MCF 10A (cell line): ENCODE measurements at regions of chr11 and their contacts with region 1.

Region 1: DNA sequence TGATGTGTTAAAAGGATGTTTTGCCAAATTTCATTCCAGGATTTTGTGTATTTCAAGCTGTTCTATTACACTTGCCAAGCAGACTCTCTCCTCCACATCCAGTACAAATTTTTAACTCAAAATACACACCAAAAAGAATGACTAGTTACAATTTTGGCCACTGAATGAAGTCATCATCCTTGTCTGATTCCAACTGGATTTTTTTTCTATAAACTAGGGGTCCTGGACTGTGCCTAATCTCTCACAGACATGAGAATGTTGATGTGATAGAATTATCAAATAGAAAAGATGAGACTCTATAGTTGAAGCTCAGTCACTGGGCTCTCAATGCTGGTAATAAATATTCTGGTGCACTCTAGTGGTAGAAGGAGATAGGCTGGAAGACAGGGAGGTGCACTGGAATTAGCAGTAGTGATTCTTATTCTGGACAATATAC is 85.8 kb downstream of the FANCF start:
- DNase-seq: peak; percentile 51
- H3K4me3 Mint-ChIP-seq: no peak overlapping the region
- H3K27ac Mint-ChIP-seq: no peak overlapping the region
- H3K4me1 Mint-ChIP-seq: no peaks in the 10 kb centered on the region
- H3K27me3 Mint-ChIP-seq: peaks cover 42% of the 10 kb centered on the region
- CTCF ChIP-seq: peak; percentile 65

Region 2: GRCh38 chr11:22337596-22338485 is 202.0 kb before region 1 on chr11 and contains the start of gene SLC17A6:
- CTCF ChIA-PET with region 1: interaction called, 60 read pairs
- POLR2A ChIA-PET with region 1: interaction called, 4 read pairs
- intact Hi-C with region 1: loop called (anchors 1 kb)
- DNase-seq: peak; percentile 65
- H3K4me3 Mint-ChIP-seq: no peak within 1 kb of the TSS
- H3K27ac Mint-ChIP-seq: no peak within 1 kb of the TSS
- H3K4me1 Mint-ChIP-seq: no peaks in the 10 kb centered on the region
- H3K27me3 Mint-ChIP-seq: peaks cover 71% of the 10 kb centered on the region
- CTCF ChIP-seq: no peak
- total RNA-seq, gene SLC17A6: not detected in 2 replicates

Region 3: GRCh38 chr11:22426915-22427314 is 112.9 kb before region 1 on chr11:
- CTCF ChIA-PET with region 1: interaction called, 11 read pairs
- POLR2A ChIA-PET with region 1: no interaction called
- intact Hi-C with region 1: loop called (anchors 1 kb)
- DNase-seq: no peak
- H3K4me3 Mint-ChIP-seq: no peak overlapping the region
- H3K27ac Mint-ChIP-seq: no peak overlapping the region
- H3K4me1 Mint-ChIP-seq: no peaks in the 10 kb centered on the region
- H3K27me3 Mint-ChIP-seq: peaks cover 44% of the 10 kb centered on the region
- CTCF ChIP-seq: peak; percentile 22

Region 4: DNA sequence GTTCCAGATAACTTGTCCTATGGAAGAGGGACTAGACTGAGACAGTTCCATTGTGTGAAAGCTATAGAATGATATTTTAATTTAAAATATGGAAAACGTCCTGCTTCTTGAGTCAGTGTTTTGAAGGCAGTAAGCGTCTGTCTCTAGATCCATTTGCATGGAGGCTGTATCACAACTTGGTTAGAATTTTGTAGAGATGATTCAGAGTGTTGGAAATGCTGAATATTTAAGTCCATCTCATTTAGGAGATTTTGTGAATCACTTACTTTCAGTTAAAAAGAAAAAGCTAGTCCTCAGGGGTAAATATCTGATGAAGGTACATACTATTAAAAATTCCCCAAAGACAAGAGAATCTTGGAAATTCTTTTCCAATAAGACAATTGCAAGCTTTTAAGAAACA is 13.0 kb after region 1 on chr11:
- CTCF ChIA-PET with region 1: interaction called, 12 read pairs
- POLR2A ChIA-PET with region 1: no interaction called
- intact Hi-C with region 1: no loop called
- DNase-seq: no peak
- H3K4me3 Mint-ChIP-seq: no peak overlapping the region
- H3K27ac Mint-ChIP-seq: no peak overlapping the region
- H3K4me1 Mint-ChIP-seq: no peaks in the 10 kb centered on the region
- H3K27me3 Mint-ChIP-seq: peaks cover 54% of the 10 kb centered on the region
- CTCF ChIP-seq: no peak